ENCODE measurements at regions of chr2 and their contacts with region 1.

Region 1: DNA sequence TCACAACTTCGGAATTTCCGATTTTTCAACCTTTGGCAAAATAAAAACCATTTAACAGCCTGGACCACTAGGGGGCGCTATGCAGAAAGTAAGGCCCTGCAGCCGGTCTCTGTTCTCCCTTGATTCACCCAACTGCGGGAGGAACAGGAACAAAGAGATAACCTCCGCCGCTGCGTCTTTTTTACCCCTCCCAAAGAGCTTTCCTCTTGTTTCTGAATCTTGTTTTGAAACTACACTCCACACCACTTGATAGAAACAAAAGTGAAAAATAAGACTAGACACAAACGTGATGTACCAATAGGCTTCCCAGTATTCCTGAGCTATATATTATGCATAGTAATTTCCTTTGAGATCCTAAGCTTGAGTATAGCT is 231.2 kb downstream of the MYO3B start:
- DNase-seq: peak; percentile 62
- H3K4me3 ChIP-seq: no peak overlapping the region
- H3K27ac ChIP-seq: no peak overlapping the region
- H3K27me3 ChIP-seq: no peaks in the 10 kb centered on the region
- CTCF ChIP-seq: peak; percentile 85

Region 2: GRCh38 chr2:170530284-170530745 is 121.2 kb after region 1 on chr2:
- in situ Hi-C with region 1: no loop called
- DNase-seq: peak; percentile 74
- H3K4me3 ChIP-seq: no peak overlapping the region
- H3K27ac ChIP-seq: no peak overlapping the region
- H3K27me3 ChIP-seq: no peaks in the 10 kb centered on the region
- CTCF ChIP-seq: no peak

Region 3: DNA sequence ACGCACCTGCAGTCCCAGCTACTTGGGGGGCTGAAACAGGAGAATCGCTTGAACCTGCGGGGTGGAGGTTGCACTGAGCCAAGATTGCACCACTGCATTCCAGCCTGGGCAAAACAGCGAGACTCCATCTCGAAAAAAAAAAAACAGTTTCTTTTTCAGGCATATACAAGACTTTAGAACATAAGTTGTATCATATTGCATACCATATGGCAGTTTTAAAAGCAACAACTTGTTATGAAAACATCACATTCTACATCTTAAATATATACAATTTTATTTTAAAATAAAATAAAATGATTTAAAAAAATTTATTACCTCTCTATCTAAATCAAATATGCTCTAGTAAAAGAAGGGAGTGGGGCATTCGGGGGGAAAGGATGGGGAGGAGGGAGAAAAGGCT is 266.6 kb after region 1 on chr2:
- in situ Hi-C with region 1: no loop called
- DNase-seq: no peak
- H3K4me3 ChIP-seq: no peak overlapping the region
- H3K27ac ChIP-seq: no peak overlapping the region
- H3K27me3 ChIP-seq: no peaks in the 10 kb centered on the region
- CTCF ChIP-seq: no peak

Region 4: GRCh38 chr2:170715062-170715931 is 306.1 kb after region 1 on chr2 and contains the start of gene SP5:
- in situ Hi-C with region 1: loop called (anchors 25 kb)
- DNase-seq: peak; percentile 20
- H3K4me3 ChIP-seq: peak within 1 kb of the TSS; percentile 33
- H3K27ac ChIP-seq: no peak within 1 kb of the TSS
- H3K27me3 ChIP-seq: peaks cover 91% of the 10 kb centered on the region
- CTCF ChIP-seq: no peak

Region 5: GRCh38 chr2:170815746-170816503 is 406.8 kb after region 1 on chr2:
- in situ Hi-C with region 1: loop called (anchors 25 kb)
- DNase-seq: peak; percentile 33
- H3K4me3 ChIP-seq: no peak overlapping the region
- H3K27ac ChIP-seq: no peak overlapping the region
- H3K27me3 ChIP-seq: peaks cover 71% of the 10 kb centered on the region
- CTCF ChIP-seq: peak; percentile 82